Mammary epithelial cell (primary cell): ENCODE measurements at regions of chr19 and their contacts with region 1.

Region 1: GRCh38 chr19:32570081-32570785 is 10.8 kb upstream of the PDCD5 start:
- DNase-seq: peak; percentile 49
- H3K4me3 ChIP-seq: no peak overlapping the region
- H3K27ac ChIP-seq: no peak overlapping the region
- H3K4me1 ChIP-seq: no peaks in the 10 kb centered on the region
- H3K27me3 ChIP-seq: peaks cover 3% of the 10 kb centered on the region
- CTCF ChIP-seq: peak; percentile 65 to 78

Region 2: DNA sequence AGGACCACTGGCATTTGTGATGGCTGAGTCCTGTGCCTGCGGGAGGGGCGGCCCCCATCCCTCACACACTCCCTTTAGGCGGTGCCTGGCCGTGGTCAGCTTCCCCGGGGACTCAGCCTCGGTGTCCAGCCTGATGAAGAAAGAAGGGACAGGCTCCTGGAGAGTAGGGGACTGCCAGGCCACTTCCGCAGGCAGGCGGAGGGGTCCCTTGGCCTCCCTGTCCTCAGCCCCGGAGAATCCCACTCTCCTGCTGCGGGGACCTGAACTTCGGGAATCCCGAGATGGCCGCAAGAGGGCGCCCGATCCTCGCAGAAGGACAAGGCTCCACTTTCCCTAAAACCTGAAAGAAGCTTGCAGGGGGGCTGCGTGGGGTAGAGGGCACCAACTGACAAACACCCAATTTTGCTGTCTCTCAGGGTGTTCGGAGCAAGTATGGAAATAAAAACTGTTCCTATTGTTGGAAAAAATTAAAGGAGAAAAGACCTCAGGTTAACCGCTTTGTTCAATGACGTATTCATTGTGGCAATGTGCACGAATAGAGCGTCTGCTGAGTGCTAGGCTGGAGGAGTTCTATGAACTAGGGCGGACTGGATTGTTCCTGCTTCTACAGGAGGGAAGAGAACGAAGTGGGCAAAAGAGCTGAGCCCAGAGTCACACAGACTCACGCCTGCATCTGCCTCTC is 1900.8 kb before region 1 on chr19:
- CTCF ChIA-PET with region 1: interaction called, 9 read pairs
- dilution Hi-C with region 1: no loop called
- in situ Hi-C with region 1: loop called in 1 of 2 experiments (anchors 25 kb)
- intact Hi-C with region 1: loop called (anchors 5 kb)
- DNase-seq: peak; percentile 62
- H3K4me3 ChIP-seq: no peak overlapping the region
- H3K27ac ChIP-seq: no peak overlapping the region
- H3K4me1 ChIP-seq: peaks cover 6% of the 10 kb centered on the region
- H3K27me3 ChIP-seq: peaks cover 1% of the 10 kb centered on the region
- CTCF ChIP-seq: peak; percentile 66 to 84

Region 3: DNA sequence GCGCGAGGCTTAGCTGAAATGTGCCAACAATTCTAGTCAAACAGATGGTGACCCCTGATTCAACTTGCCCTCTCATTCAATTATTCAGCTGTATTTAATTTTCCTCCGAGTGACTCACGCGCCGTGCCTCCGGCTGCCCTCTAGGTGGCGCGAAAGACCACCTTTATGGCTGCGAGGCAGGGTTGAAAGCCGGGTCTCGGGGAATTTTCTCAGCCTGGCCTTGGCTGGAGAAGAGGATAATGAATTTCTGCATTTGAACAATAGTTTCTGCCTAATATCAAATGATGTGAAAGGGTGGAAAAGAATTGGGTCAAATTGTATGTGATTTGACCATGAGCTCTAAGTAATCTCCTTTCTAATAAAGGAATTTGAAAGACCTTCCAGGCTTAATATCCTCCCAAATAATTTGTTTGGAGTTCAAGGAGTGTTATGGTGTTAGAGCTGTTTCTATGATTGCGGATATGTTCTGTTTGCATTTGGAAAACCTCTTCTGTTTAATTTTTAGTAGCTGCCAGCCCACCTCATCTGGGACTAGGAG is 1887.2 kb before region 1 on chr19:
- CTCF ChIA-PET with region 1: no interaction called
- dilution Hi-C with region 1: no loop called
- in situ Hi-C with region 1: loop called in 1 of 2 experiments (anchors 25 kb)
- intact Hi-C with region 1: loop called (anchors 1 kb)
- DNase-seq: peak; percentile 68
- H3K4me3 ChIP-seq: no peak overlapping the region
- H3K27ac ChIP-seq: no peak overlapping the region
- H3K4me1 ChIP-seq: no peaks in the 10 kb centered on the region
- H3K27me3 ChIP-seq: no peaks in the 10 kb centered on the region
- CTCF ChIP-seq: peak; percentile 79 to 87

Region 4: DNA sequence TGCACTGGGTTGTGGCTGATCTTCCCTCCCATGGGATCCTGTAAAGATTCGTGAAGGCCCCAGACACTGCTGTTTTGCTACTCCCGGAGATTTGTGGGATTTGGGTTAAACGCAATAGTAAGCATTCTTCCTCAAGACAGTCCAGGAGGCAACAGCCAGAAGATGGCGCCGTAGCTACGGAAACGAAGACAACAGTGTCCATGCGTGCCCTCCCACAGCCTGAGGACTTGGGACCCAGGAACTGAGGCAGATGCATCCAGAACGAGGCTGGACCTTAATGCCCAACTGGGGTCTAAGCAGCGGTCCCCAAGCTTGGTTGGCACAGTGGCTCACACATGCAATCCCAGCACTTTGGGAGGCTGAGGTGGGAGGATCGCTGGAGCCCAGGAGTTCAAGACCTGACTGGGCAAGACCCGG is 282.4 kb before region 1 on chr19:
- CTCF ChIA-PET with region 1: no interaction called
- dilution Hi-C with region 1: no loop called
- in situ Hi-C with region 1: no loop called
- intact Hi-C with region 1: loop called (anchors 1 kb)
- DNase-seq: peak; percentile 29
- H3K4me3 ChIP-seq: no peak overlapping the region
- H3K27ac ChIP-seq: no peak overlapping the region
- H3K4me1 ChIP-seq: no peaks in the 10 kb centered on the region
- H3K27me3 ChIP-seq: no peaks in the 10 kb centered on the region
- CTCF ChIP-seq: peak; percentile 10 to 32

Region 5: GRCh38 chr19:32339988-32340874 is 230.0 kb before region 1 on chr19:
- CTCF ChIA-PET with region 1: interaction called, 3 read pairs
- dilution Hi-C with region 1: no loop called
- in situ Hi-C with region 1: loop called (anchors 25 kb)
- intact Hi-C with region 1: loop called (anchors 1 kb)
- DNase-seq: no peak
- H3K4me3 ChIP-seq: no peak overlapping the region
- H3K27ac ChIP-seq: no peak overlapping the region
- H3K4me1 ChIP-seq: no peaks in the 10 kb centered on the region
- H3K27me3 ChIP-seq: no peaks in the 10 kb centered on the region
- CTCF ChIP-seq: peak; percentile 62 to 73

Region 6: GRCh38 chr19:32345261-32346207 is 224.7 kb before region 1 on chr19 and contains the start of gene ZNF507:
- CTCF ChIA-PET with region 1: no interaction called
- dilution Hi-C with region 1: no loop called
- in situ Hi-C with region 1: loop called (anchors 25 kb)
- intact Hi-C with region 1: loop called (anchors 1 kb)
- DNase-seq: peak; percentile 61
- H3K4me3 ChIP-seq: peak within 1 kb of the TSS; percentile 95 to 99 (median 97)
- H3K27ac ChIP-seq: peak within 1 kb of the TSS; percentile 61
- H3K4me1 ChIP-seq: no peaks in the 10 kb centered on the region
- H3K27me3 ChIP-seq: no peaks in the 10 kb centered on the region
- CTCF ChIP-seq: no peak
- total RNA-seq, gene ZNF507: 10.2 to 14.4 TPM

Region 7: DNA sequence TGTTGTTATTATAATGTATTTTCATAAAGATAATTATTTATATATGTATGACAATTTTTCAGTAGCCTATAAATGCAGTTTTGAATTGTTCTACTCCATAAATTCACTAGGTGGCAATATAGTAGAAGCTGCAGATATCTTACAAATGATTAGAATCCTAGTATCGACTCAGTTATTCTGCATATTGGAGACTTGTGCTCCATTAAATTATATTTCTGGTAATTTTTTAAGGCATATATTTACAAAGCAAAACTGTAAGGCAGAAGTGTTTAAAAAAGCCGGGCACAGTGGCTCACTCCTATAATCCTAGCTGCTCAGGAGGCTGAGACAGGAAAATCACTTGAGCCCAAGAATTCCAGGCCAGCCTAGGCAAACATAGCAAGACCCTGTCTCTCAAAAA is 106.0 kb before region 1 on chr19:
- CTCF ChIA-PET with region 1: no interaction called
- dilution Hi-C with region 1: no loop called
- in situ Hi-C with region 1: no loop called
- intact Hi-C with region 1: loop called (anchors 1 kb)
- DNase-seq: peak; percentile 4
- H3K4me3 ChIP-seq: no peak overlapping the region
- H3K27ac ChIP-seq: no peak overlapping the region
- H3K4me1 ChIP-seq: no peaks in the 10 kb centered on the region
- H3K27me3 ChIP-seq: no peaks in the 10 kb centered on the region
- CTCF ChIP-seq: peak; percentile 6 to 43

Region 8: GRCh38 chr19:32708457-32708856 is 138.2 kb after region 1 on chr19:
- CTCF ChIA-PET with region 1: no interaction called
- dilution Hi-C with region 1: no loop called
- in situ Hi-C with region 1: no loop called
- intact Hi-C with region 1: no loop called
- DNase-seq: no peak
- H3K4me3 ChIP-seq: no peak overlapping the region
- H3K27ac ChIP-seq: no peak overlapping the region
- H3K4me1 ChIP-seq: no peaks in the 10 kb centered on the region
- H3K27me3 ChIP-seq: no peaks in the 10 kb centered on the region
- CTCF ChIP-seq: no peak